Transverse colon (tissue), 4 donors: ENCODE measurements at regions of chr3 and their contacts with region 1.

Region 1: DNA sequence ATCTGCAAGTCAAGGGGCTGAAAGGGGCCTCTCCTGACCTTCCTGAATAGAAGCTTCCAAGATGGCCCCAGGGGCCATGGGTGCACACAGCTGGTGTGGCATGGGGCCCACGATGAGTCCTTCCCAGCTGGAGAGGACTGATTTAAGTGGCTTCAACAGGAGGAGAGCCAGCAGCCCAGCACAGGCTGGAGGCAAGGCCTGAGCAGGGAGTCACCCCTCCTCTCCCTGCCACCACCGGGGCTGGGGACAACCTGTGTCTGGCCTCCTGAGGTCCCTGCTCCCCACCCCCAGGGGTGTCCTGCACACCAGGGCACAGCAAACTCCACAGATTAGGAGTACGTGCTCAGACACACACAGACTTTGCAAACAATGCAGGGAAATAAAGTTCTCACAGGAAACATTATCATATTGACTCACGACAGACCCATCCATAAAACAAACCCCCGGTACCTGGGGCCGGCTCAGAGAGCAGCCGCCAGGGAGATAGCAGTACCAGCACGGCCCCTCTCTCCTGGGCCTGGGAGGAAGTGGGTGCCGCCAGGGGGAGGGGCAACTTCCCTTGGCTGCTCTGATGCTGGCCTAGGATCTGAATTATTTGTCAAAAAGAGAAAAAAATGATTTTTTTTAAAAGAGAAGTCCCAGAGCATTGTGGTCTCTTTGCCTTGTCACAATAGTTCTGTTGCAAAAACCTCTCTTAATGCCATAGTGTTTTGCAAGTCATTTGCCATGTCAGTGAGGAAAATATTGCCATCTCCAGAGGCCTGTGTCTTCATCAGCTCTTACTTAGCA is 21.9 kb upstream of the TSEN2 start:
- DNase-seq: peak; percentile 48
- H3K4me3 ChIP-seq: no peak overlapping the region
- H3K27ac ChIP-seq: peak overlapping the region; percentile 62 to 76 (median 67)
- H3K4me1 ChIP-seq: peaks cover 0 to 47% (median 36%) of the 10 kb centered on the region in 4 donors
- H3K27me3 ChIP-seq: no peaks in the 10 kb centered on the region
- CTCF ChIP-seq: no peak
- EP300 ChIP-seq: no peak
- POLR2A ChIP-seq: no peak

Region 2: DNA sequence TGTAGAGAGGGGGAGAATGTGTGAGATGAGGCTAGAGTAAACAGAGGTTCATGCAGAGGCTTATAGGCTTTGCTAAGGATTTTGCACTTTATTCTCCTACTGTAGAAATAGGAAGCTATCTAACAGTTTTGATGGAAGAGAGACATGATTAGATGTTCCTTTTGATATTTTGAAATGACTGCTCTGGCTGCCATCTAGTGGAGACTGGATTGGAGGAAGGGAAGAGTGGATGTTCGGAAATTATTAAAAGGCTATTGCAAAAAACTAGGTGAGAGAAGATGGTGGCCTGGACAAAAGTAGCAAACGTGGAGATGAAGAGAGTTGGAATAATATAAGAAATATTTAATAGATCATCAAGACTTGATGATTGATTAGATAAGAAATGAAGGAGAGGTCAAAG is 415.9 kb before region 1 on chr3:
- in situ Hi-C with region 1: no loop called
- intact Hi-C with region 1: no loop called
- DNase-seq: no peak
- H3K4me3 ChIP-seq: no peak overlapping the region
- H3K27ac ChIP-seq: no peak overlapping the region
- H3K4me1 ChIP-seq: no peaks in the 10 kb centered on the region
- H3K27me3 ChIP-seq: peaks cover 10% of the 10 kb centered on the region
- CTCF ChIP-seq: peak in 3 of 5 experiments; percentile 15 to 23 (median 20)
- EP300 ChIP-seq: no peak
- POLR2A ChIP-seq: no peak

Region 3: GRCh38 chr3:12143949-12144504 is 318.3 kb before region 1 on chr3:
- in situ Hi-C with region 1: loop called in 1 of 4 experiments (anchors 10 kb)
- intact Hi-C with region 1: no loop called
- DNase-seq: peak; percentile 35
- H3K4me3 ChIP-seq: no peak overlapping the region
- H3K27ac ChIP-seq: peak overlapping the region; percentile 63 to 71 (median 70)
- H3K4me1 ChIP-seq: peaks cover 0 to 10% (median 3%) of the 10 kb centered on the region in 4 donors
- H3K27me3 ChIP-seq: no peaks in the 10 kb centered on the region
- CTCF ChIP-seq: no peak
- EP300 ChIP-seq: peak; percentile 83
- POLR2A ChIP-seq: no peak

Region 4: GRCh38 chr3:12758025-12758830 is 295.9 kb after region 1 on chr3:
- in situ Hi-C with region 1: no loop called
- intact Hi-C with region 1: no loop called
- DNase-seq: no peak
- H3K4me3 ChIP-seq: no peak overlapping the region
- H3K27ac ChIP-seq: peak overlapping the region; percentile 41 to 64 (median 50)
- H3K4me1 ChIP-seq: peaks cover 0 to 7% (median 6%) of the 10 kb centered on the region in 4 donors
- H3K27me3 ChIP-seq: no peaks in the 10 kb centered on the region
- CTCF ChIP-seq: no peak
- EP300 ChIP-seq: no peak
- POLR2A ChIP-seq: no peak